Naive thymus-derived CD4-positive, alpha-beta T cell (primary cell): ENCODE measurements at regions of chr16 and their contacts with region 1.

Region 1: GRCh38 chr16:48353565-48354163 is 31.5 kb downstream of the SIAH1 start:
- DNase-seq: peak; percentile 36 to 82 (median 77)
- ATAC-seq: peak; percentile 98
- H3K4me3 ChIP-seq: no peak overlapping the region
- H3K4me3 Mint-ChIP-seq: peak overlapping the region in 1 of 10 donors; percentile 16
- H3K27ac ChIP-seq: no peak overlapping the region
- H3K27ac Mint-ChIP-seq: peak overlapping the region; percentile 14 to 89 (median 74)
- H3K4me1 ChIP-seq: no peaks in the 10 kb centered on the region
- H3K4me1 Mint-ChIP-seq: peaks cover 6 to 20% (median 13%) of the 10 kb centered on the region in 7 donors
- H3K27me3 ChIP-seq: no peaks in the 10 kb centered on the region
- H3K27me3 Mint-ChIP-seq: no peaks in the 10 kb centered on the region

Region 2: GRCh38 chr16:48318630-48319029 is 35.0 kb before region 1 on chr16:
- CTCF ChIA-PET with region 1: interaction called, 5 read pairs
- POLR2A ChIA-PET with region 1: no interaction called
- intact Hi-C with region 1: loop called (anchors 1 to 2 kb)
- DNase-seq: peak in 8 of 9 donors; percentile 25 to 83 (median 76)
- ATAC-seq: peak; percentile 92
- H3K4me3 ChIP-seq: peak overlapping the region; percentile 25
- H3K4me3 Mint-ChIP-seq: peak overlapping the region; percentile 62 to 88 (median 80)
- H3K27ac ChIP-seq: peak overlapping the region; percentile 9
- H3K27ac Mint-ChIP-seq: peak overlapping the region; percentile 58 to 88 (median 82)
- H3K4me1 ChIP-seq: peaks cover 20 to 35% of the 10 kb centered on the region in 2 donors
- H3K4me1 Mint-ChIP-seq: peaks cover 17 to 77% (median 62%) of the 10 kb centered on the region in 7 donors
- H3K27me3 ChIP-seq: no peaks in the 10 kb centered on the region
- H3K27me3 Mint-ChIP-seq: no peaks in the 10 kb centered on the region

Region 3: DNA sequence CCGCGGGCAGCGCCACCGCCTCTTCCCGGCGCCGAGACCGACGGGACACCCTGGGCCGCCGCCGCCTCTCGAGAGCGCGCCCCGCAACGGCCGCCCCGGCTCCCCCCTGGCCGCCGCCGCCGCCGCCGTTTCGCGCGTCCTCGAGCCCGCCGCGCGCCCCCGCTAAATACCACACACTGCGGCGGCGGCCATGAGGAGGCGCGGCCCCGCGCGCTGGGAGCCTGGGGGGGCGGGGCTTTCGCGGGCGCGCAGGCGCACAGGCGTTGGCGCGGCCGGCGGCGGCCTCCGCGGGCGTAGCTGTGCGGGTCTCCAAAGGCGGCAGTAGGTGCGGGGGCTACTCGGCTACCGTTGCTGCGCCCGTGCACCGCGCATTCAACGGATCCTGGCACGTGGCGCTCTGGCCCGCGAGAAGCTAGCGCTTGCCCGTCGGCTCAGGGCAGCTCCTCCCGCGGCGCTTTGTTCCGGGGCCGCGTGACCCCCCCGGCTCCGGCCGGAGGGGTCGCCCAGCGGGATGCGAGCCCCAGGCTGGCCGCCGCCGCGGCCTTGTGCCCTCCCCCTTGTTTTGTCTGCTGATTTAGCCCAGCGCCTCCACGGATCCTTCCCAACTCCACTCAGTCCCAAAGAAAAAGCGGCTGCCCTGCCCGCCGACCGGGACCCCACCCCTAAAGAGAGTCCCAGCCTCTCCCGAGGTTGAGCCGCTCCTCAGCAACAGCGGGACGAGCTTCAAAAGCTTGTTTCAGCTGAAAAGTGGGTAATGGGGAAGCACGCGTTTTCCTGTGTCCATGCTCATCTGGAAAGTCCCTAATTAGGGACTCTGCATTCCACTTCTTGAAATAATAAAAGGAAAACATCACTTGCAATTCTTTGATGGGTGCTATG is 31.8 kb after region 1 on chr16 and contains the start of gene SIAH1:
- CTCF ChIA-PET with region 1: interaction called, 4 read pairs
- POLR2A ChIA-PET with region 1: interaction called, 6 read pairs
- intact Hi-C with region 1: loop called (anchors 1 to 5 kb)
- DNase-seq: peak; percentile 79 to 95 (median 89)
- ATAC-seq: peak; percentile 95
- H3K4me3 ChIP-seq: peak within 1 kb of the TSS; percentile 88
- H3K4me3 Mint-ChIP-seq: peak within 1 kb of the TSS; percentile 90 to 98 (median 94)
- H3K27ac ChIP-seq: peak within 1 kb of the TSS; percentile 94
- H3K27ac Mint-ChIP-seq: peak within 1 kb of the TSS; percentile 80 to 97 (median 94)
- H3K4me1 ChIP-seq: peaks cover 12 to 16% of the 10 kb centered on the region in 2 donors
- H3K4me1 Mint-ChIP-seq: peaks cover 18 to 39% (median 31%) of the 10 kb centered on the region in 7 donors
- H3K27me3 ChIP-seq: no peaks in the 10 kb centered on the region
- H3K27me3 Mint-ChIP-seq: peaks cover 0 to 5% (median 0%) of the 10 kb centered on the region in 5 donors
- total RNA-seq, gene SIAH1: 14.5 to 51.1 (median 19.8) TPM

Region 4: GRCh38 chr16:48542020-48542473 is 188.4 kb after region 1 on chr16:
- CTCF ChIA-PET with region 1: no interaction called
- POLR2A ChIA-PET with region 1: no interaction called
- intact Hi-C with region 1: loop called (anchors 1 kb)
- DNase-seq: peak in 4 of 9 donors; percentile 12 to 27 (median 24)
- ATAC-seq: peak; percentile 67
- H3K4me3 ChIP-seq: no peak overlapping the region
- H3K4me3 Mint-ChIP-seq: no peak overlapping the region
- H3K27ac ChIP-seq: no peak overlapping the region
- H3K27ac Mint-ChIP-seq: peak overlapping the region in 4 of 9 donors; percentile 7 to 69 (median 48)
- H3K4me1 ChIP-seq: peaks cover under 1 to 8% of the 10 kb centered on the region in 2 donors
- H3K4me1 Mint-ChIP-seq: peaks cover 8 to 17% (median 14%) of the 10 kb centered on the region in 7 donors
- H3K27me3 ChIP-seq: no peaks in the 10 kb centered on the region
- H3K27me3 Mint-ChIP-seq: no peaks in the 10 kb centered on the region